ENCODE measurements at regions of chr5 and their contacts with region 1.

Region 1: GRCh38 chr5:177454397-177455035 is 7.9 kb downstream of the PRR7 start:
- DNase-seq: peak; percentile 96
- H3K4me3 ChIP-seq: peak overlapping the region; percentile 46 to 67 (median 64)
- H3K27ac ChIP-seq: peak overlapping the region; percentile 76 to 92 (median 88)
- H3K4me1 ChIP-seq: peaks cover 10 to 27% (median 24%) of the 10 kb centered on the region in 4 donors
- H3K27me3 ChIP-seq: peaks cover 2% of the 10 kb centered on the region
- CTCF ChIP-seq: peak; percentile 93 to 98 (median 95)
- EP300 ChIP-seq: peak; percentile 17
- POLR2A ChIP-seq: no peak

Region 2: DNA sequence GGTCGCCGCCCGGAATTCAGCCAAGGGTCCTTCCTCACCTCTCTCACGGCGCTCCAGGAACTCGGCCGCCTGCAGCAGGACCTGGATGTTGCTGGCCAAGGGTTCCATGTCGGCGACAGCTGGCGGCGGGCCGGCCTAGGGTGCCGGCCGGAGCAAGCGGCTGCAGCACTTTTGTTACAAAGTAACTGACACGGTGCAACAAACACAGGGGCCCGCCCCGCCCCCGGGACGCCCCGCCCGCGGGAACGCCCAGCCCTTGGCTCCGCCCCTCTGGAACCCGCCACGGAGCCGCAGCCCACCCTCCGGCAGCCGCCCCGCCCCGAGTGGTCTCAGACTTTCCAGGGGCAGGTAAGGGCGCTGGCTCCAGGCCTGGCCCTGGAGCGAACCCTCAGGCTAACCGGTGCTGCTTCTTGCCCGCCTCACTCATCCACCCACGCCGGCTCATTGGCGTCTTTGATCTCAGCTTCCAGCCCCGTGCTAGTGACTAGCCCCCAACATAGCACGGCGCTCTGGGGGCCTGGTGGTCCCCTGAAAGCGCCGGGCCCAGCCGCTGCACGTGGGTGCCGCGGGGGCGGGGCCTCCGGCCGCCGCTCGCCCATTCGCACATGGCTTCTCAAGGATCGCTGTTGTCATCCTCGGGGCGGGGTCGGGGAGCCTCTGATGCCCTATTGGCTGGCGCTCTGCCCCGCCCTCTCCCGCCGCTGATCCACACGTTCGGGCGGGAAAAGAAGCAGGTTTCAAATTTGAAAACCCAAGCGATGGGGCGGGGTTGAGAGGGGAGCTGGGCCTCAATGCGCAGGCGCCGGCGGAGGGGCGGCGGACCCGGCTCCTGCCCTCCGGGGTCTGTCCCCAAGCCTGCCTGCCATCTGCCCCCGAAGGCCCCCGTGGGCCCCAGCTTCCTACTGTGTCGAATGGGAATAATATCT is 142.5 kb before region 1 on chr5 and contains the start of gene MXD3:
- in situ Hi-C with region 1: loop called in 1 of 4 experiments (anchors 25 kb)
- intact Hi-C with region 1: loop called (anchors 10 kb)
- DNase-seq: peak; percentile 98
- H3K4me3 ChIP-seq: peak within 1 kb of the TSS; percentile 2 to 76 (median 41)
- H3K27ac ChIP-seq: peak within 1 kb of the TSS; percentile 63 to 70 (median 67)
- H3K4me1 ChIP-seq: peaks cover 20 to 35% (median 27%) of the 10 kb centered on the region in 4 donors
- H3K27me3 ChIP-seq: no peaks in the 10 kb centered on the region
- CTCF ChIP-seq: no peak
- EP300 ChIP-seq: no peak
- POLR2A ChIP-seq: no peak
- total RNA-seq, gene MXD3: 10.8 to 257 (median 21.7) TPM

Region 3: DNA sequence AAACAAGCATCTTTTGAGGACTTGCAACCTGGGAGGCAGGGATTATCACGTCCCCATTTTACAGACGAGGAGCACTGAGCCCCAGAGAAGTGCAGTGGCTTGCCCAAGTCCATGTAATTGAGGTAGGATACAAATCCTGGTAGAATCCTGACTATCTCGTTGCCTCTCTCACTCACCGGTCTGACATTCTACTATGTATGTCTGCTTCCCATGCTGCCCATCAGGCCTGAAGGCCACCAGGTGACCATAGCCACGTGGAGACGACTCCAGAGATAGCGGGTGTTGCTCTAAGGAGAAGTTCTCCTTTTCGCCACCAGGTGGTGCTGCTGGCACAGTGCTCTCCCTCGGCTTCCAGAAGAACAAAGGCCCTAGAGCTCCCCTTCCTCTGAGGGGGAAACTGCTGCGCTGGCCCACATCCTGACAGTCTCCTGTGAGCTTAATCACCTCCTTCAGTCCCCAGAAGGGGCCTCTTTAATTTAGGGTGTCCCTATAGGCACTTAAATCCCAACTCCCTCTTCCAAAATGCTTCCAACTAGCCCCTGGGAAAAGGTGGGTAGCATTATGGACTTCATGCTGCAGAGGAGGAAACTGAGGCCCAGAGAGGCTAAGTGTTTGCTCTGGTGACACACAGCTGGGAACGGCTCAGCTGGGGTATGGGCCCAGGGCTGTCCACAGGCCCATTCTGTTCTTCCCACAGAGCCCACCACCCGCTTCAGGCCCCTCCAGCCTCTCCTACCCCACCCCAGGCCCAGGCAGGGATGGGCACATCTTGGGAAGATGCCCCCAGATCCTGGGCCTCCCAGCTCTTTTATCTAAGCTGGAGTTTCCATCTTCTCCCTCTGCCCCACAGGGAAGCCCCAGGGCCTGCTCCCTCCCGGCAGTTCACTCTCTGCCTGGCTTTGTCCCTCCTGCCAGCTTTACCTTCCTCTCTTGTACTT is 63.9 kb before region 1 on chr5:
- in situ Hi-C with region 1: loop called in 3 of 4 experiments (anchors 5 to 10 kb)
- intact Hi-C with region 1: loop called (anchors 5 kb)
- DNase-seq: peak; percentile 91
- H3K4me3 ChIP-seq: no peak overlapping the region
- H3K27ac ChIP-seq: peak overlapping the region in 2 of 4 donors; percentile 8 to 42
- H3K4me1 ChIP-seq: peaks cover 0 to 14% (median 6%) of the 10 kb centered on the region in 4 donors
- H3K27me3 ChIP-seq: no peaks in the 10 kb centered on the region
- CTCF ChIP-seq: peak; percentile 97 to 99 (median 98)
- EP300 ChIP-seq: no peak
- POLR2A ChIP-seq: no peak

Region 4: DNA sequence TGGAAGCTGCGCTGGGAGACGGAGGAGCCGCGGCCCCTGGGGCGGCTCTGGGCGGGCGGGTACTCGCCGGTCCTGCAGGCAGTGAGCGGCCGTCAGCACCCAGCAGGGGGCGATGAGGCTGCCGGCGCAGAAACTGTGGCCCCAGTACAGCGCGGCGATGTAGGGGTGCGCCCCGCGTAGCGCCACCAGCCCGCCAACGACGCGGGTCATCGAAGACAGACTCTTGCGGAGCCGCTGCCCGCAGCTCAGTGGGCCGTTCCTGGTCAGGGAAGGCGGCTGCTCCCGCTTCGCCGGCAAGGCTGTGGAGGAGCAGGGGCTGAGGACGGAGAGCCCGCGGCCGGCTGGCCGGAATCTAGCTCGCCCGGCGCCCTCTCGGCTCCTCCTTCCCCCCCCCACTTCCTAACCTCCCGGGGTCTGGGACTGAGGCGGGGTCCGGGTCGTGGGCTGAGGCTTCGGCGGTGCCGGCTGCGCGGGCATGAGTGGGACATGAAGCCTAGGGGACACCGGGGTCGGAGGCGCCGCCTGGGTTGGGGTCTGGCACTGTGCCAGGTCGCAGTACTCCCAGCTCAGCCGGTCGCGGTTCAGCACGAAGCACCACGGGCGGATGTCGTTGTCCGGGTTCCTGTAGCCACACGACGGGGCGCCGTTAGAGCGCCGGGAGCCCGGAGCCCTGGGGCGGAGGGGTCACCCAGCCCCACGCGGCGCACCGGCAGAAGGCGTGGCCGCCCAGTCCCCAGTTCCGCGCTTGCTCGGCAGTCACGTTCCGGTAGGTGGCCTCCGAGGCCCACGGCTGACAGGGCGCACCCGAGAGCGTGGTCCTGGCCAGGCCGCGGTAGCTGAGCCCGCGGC is 50.5 kb before region 1 on chr5:
- in situ Hi-C with region 1: loop called in 1 of 4 experiments (anchors 10 kb)
- intact Hi-C with region 1: loop called (anchors 2 kb)
- DNase-seq: peak; percentile 92
- H3K4me3 ChIP-seq: peak overlapping the region; percentile 2 to 81 (median 47)
- H3K27ac ChIP-seq: peak overlapping the region; percentile 61 to 86 (median 74)
- H3K4me1 ChIP-seq: peaks cover 20 to 50% (median 42%) of the 10 kb centered on the region in 4 donors
- H3K27me3 ChIP-seq: peaks cover 48% of the 10 kb centered on the region
- CTCF ChIP-seq: peak; percentile 65 to 87 (median 68)
- EP300 ChIP-seq: no peak
- POLR2A ChIP-seq: no peak

Region 5: DNA sequence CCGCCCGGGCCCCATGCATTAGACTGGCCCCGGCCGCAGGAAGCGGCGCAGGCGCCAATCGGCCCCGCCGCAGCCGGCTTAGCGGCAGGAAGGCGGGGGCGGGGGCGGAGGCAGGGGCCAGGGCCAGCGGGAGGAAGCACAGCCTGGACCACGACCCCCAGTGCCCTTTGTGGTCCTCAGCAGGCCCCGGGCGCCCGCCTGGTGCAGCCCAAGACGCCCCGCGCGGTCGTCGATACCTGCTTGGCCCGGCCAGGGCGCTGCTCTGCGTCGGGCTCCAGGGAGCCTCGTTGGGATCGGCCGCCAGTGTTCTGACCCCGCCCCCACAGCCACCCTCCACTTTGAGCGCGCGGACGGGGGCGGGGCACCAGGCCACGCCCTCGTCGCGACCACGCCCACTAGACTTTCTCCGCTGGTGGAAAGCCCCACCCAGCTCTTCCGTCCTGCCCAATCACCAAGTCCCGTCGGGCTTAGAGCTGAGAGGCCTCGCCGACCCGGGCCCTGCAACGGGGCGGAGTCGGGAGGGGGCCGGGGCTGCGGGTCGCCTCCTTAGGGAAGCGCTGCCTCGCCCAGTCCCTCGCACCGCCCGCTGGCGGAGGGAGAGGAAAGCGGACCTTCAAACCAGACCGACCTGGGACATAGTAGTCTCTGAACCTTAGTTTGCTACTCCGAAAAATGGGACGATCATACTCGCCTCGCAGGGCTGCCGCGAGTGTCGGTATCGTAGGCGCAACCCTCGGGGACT is 42.9 kb after region 1 on chr5 and contains the start of gene PDLIM7:
- in situ Hi-C with region 1: no loop called
- intact Hi-C with region 1: loop called (anchors 2 kb)
- DNase-seq: peak; percentile 97
- H3K4me3 ChIP-seq: peak within 1 kb of the TSS; percentile 54 to 80 (median 65)
- H3K27ac ChIP-seq: peak within 1 kb of the TSS; percentile 91 to 96 (median 94)
- H3K4me1 ChIP-seq: peaks cover 20 to 64% (median 45%) of the 10 kb centered on the region in 4 donors
- H3K27me3 ChIP-seq: peaks cover 10% of the 10 kb centered on the region
- CTCF ChIP-seq: peak in 2 of 5 experiments; percentile 7 to 10
- EP300 ChIP-seq: no peak
- POLR2A ChIP-seq: peak; percentile 90
- total RNA-seq, gene PDLIM7: 52.6 to 256 (median 78.6) TPM